MCF 10A (cell line): ENCODE measurements at regions of chr11 and their contacts with region 1.

Region 1: GRCh38 chr11:122159173-122159721 is 43.2 kb upstream of the BLID start:
- DNase-seq: peak; percentile 75
- H3K4me3 Mint-ChIP-seq: peak overlapping the region; percentile 76
- H3K27ac Mint-ChIP-seq: peak overlapping the region; percentile 96
- H3K4me1 Mint-ChIP-seq: peaks cover 76% of the 10 kb centered on the region
- H3K27me3 Mint-ChIP-seq: no peaks in the 10 kb centered on the region
- CTCF ChIP-seq: no peak

Region 2: GRCh38 chr11:122123263-122123929 is 35.9 kb before region 1 on chr11:
- CTCF ChIA-PET with region 1: interaction called, 3 read pairs
- POLR2A ChIA-PET with region 1: interaction called, 11 read pairs
- intact Hi-C with region 1: no loop called
- DNase-seq: peak; percentile 42
- H3K4me3 Mint-ChIP-seq: no peak overlapping the region
- H3K27ac Mint-ChIP-seq: peak overlapping the region; percentile 75
- H3K4me1 Mint-ChIP-seq: peaks cover 22% of the 10 kb centered on the region
- H3K27me3 Mint-ChIP-seq: no peaks in the 10 kb centered on the region
- CTCF ChIP-seq: no peak

Region 3: DNA sequence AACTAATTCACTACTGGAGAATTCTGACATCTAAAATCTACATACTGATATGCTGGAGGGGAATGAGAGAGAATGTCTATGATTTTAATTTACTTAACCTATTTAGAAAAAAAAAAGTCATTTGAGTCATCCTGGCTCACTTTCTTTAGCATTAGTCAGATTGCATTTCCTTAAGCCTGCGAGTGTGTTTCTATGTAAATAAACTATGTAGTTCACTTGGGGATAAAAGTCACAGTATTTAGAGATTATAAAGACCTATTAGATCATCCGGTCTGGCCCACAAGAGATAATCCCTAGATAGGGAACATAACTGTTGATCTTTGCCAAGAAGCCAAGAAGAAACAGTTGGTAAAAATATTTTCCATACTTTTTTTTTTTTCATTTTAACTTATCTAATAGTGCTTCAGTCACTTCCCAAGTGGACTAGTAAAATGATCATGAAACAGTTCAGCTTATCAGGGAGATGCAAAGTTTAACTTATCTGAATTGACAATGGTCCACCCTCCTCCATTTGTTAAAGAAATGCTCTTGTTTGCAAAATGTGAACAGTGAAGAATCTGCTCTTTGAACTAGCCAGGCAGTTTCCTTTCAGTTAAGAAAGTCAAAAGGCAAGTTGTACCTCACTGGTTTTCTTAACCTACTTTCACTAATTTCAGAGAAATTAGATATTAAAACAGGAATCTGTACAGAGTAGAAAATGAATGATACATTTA is 22.0 kb before region 1 on chr11:
- CTCF ChIA-PET with region 1: interaction called, 5 read pairs
- POLR2A ChIA-PET with region 1: interaction called, 82 read pairs
- intact Hi-C with region 1: no loop called
- DNase-seq: peak; percentile 70
- H3K4me3 Mint-ChIP-seq: no peak overlapping the region
- H3K27ac Mint-ChIP-seq: peak overlapping the region; percentile 89
- H3K4me1 Mint-ChIP-seq: peaks cover 46% of the 10 kb centered on the region
- H3K27me3 Mint-ChIP-seq: no peaks in the 10 kb centered on the region
- CTCF ChIP-seq: no peak

Region 4: GRCh38 chr11:122146475-122146874 is 12.8 kb before region 1 on chr11:
- CTCF ChIA-PET with region 1: interaction called, 4 read pairs
- POLR2A ChIA-PET with region 1: interaction called, 82 read pairs
- intact Hi-C with region 1: no loop called
- DNase-seq: peak; percentile 46
- H3K4me3 Mint-ChIP-seq: no peak overlapping the region
- H3K27ac Mint-ChIP-seq: peak overlapping the region; percentile 81
- H3K4me1 Mint-ChIP-seq: peaks cover 31% of the 10 kb centered on the region
- H3K27me3 Mint-ChIP-seq: no peaks in the 10 kb centered on the region
- CTCF ChIP-seq: no peak

Region 5: DNA sequence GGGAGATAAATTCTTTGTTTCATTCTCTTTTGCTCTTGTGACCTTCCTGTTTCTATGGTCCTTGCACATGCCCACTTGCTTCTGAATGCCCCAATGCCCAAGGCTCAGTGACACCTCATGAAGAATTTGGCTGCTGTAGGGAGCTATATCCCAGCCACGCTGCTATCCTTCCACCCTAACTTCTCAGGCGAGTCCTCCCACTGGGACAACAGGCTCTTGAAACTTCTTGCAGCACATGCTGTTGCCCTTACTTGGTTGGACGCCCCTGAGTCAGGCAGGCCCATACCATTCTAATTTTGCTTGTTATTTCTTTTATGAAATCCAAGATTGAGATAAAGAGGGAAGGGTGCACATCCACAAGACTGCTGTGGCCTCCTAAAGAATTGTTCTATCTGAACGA is 14.3 kb after region 1 on chr11:
- CTCF ChIA-PET with region 1: interaction called, 3 read pairs
- POLR2A ChIA-PET with region 1: interaction called, 66 read pairs
- intact Hi-C with region 1: no loop called
- DNase-seq: no peak
- H3K4me3 Mint-ChIP-seq: peak overlapping the region; percentile 42
- H3K27ac Mint-ChIP-seq: peak overlapping the region; percentile 84
- H3K4me1 Mint-ChIP-seq: peaks cover 68% of the 10 kb centered on the region
- H3K27me3 Mint-ChIP-seq: no peaks in the 10 kb centered on the region
- CTCF ChIP-seq: no peak

Region 6: DNA sequence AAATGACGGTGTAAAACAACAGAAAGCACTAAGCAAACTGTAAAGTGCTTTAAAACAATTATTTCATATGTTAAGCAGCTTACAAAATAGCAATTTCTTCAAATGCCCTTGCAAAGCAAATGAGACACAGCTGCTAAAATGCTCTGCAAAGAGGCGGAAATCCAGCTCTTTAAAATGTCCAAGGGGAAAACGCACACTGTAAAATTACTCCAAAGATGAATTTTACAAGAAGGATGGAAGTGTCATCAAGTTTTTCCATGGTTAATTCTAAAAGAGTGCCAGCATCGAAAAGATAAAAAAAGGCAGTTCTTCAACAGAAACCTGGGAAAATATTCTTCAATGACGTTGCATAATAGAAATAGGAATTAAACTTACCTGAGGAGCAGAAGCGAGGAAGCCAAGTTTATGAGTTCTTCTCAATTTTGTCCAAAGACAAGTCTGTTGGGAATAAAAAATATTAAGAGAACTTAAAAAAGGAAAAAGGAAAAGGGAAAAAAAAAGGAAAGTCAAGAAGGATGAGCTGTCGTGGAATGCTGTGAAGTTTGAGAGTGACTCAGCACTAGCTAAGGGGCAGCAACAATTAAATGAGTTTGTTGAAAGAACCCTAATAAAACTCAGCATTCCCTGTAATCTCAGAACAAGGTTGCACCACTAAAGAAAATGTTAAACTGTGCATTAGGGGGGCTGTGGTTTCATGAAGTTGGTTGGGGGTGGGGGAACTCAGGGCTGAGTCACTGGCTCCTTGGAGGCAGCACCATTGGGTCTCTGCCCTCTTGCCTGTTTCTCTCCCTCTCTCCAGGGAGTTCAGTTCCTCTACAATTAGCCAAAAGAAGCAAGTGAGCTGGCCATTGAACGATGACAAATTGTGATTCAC is 21.0 kb after region 1 on chr11:
- CTCF ChIA-PET with region 1: interaction called, 5 read pairs
- POLR2A ChIA-PET with region 1: interaction called, 66 read pairs
- intact Hi-C with region 1: no loop called
- DNase-seq: peak; percentile 95
- H3K4me3 Mint-ChIP-seq: peak overlapping the region; percentile 67
- H3K27ac Mint-ChIP-seq: peak overlapping the region; percentile 90
- H3K4me1 Mint-ChIP-seq: peaks cover 62% of the 10 kb centered on the region
- H3K27me3 Mint-ChIP-seq: no peaks in the 10 kb centered on the region
- CTCF ChIP-seq: no peak

Region 7: GRCh38 chr11:122189229-122189628 is 30.0 kb after region 1 on chr11:
- CTCF ChIA-PET with region 1: interaction called, 7 read pairs
- POLR2A ChIA-PET with region 1: interaction called, 29 read pairs
- intact Hi-C with region 1: no loop called
- DNase-seq: peak; percentile 93
- H3K4me3 Mint-ChIP-seq: peak overlapping the region; percentile 18
- H3K27ac Mint-ChIP-seq: peak overlapping the region; percentile 83
- H3K4me1 Mint-ChIP-seq: peaks cover 38% of the 10 kb centered on the region
- H3K27me3 Mint-ChIP-seq: no peaks in the 10 kb centered on the region
- CTCF ChIP-seq: no peak

Region 8: GRCh38 chr11:122367809-122368231 is 208.6 kb after region 1 on chr11:
- CTCF ChIA-PET with region 1: no interaction called
- POLR2A ChIA-PET with region 1: no interaction called
- intact Hi-C with region 1: no loop called
- DNase-seq: peak; percentile 74
- H3K4me3 Mint-ChIP-seq: peak overlapping the region; percentile 55
- H3K27ac Mint-ChIP-seq: peak overlapping the region; percentile 80
- H3K4me1 Mint-ChIP-seq: peaks cover 43% of the 10 kb centered on the region
- H3K27me3 Mint-ChIP-seq: no peaks in the 10 kb centered on the region
- CTCF ChIP-seq: no peak